ENCODE measurements at regions of chr19 and their contacts with region 1.

Region 1: GRCh38 chr19:45792470-45793177 is at the start of gene DMWD:
- DNase-seq: peak; percentile 95 to 98 (median 96)
- H3K4me3 ChIP-seq: peak within 1 kb of the TSS; percentile 22 to 77 (median 54)
- H3K27ac ChIP-seq: no peak within 1 kb of the TSS
- H3K4me1 ChIP-seq: peaks cover 4 to 34% (median 30%) of the 10 kb centered on the region in 4 experiments
- H3K27me3 ChIP-seq: peaks cover 0 to 65% (median 29%) of the 10 kb centered on the region in 5 experiments

Region 2: GRCh38 chr19:45770192-45771101 is 22.2 kb before region 1 on chr19:
- CTCF ChIA-PET with region 1: interaction called, 138 read pairs
- POLR2A ChIA-PET with region 1: interaction called, 5 read pairs
- DNase-seq: peak; percentile 95 to 97 (median 97)
- H3K4me3 ChIP-seq: peak overlapping the region in 5 of 7 experiments; percentile 57 to 85 (median 74)
- H3K27ac ChIP-seq: peak overlapping the region in 1 of 2 experiments; percentile 64
- H3K4me1 ChIP-seq: peaks cover 0 to 39% (median 33%) of the 10 kb centered on the region in 4 experiments
- H3K27me3 ChIP-seq: peaks cover 0 to 66% (median 23%) of the 10 kb centered on the region in 5 experiments

Measured in common myeloid progenitor, CD34-positive (primary cell).